Activated CD8-positive, alpha-beta T cell treated with anti-CD3 and anti-CD28 coated beads, Interleukin-2, amount 10 ng/mL, durations not matched to agents 7 days and 5 days (primary cell): ENCODE measurements at regions of chr6 and their contacts with region 1.

Region 1: GRCh38 chr6:39102071-39102820 is 12.7 kb downstream of the SAYSD1 start:
- DNase-seq: no peak
- ATAC-seq: no peak
- H3K4me3 Mint-ChIP-seq: no peak overlapping the region
- H3K27ac Mint-ChIP-seq: no peak overlapping the region
- H3K4me1 Mint-ChIP-seq: peaks cover 11% of the 10 kb centered on the region
- H3K27me3 Mint-ChIP-seq: peaks cover 4% of the 10 kb centered on the region

Region 2: DNA sequence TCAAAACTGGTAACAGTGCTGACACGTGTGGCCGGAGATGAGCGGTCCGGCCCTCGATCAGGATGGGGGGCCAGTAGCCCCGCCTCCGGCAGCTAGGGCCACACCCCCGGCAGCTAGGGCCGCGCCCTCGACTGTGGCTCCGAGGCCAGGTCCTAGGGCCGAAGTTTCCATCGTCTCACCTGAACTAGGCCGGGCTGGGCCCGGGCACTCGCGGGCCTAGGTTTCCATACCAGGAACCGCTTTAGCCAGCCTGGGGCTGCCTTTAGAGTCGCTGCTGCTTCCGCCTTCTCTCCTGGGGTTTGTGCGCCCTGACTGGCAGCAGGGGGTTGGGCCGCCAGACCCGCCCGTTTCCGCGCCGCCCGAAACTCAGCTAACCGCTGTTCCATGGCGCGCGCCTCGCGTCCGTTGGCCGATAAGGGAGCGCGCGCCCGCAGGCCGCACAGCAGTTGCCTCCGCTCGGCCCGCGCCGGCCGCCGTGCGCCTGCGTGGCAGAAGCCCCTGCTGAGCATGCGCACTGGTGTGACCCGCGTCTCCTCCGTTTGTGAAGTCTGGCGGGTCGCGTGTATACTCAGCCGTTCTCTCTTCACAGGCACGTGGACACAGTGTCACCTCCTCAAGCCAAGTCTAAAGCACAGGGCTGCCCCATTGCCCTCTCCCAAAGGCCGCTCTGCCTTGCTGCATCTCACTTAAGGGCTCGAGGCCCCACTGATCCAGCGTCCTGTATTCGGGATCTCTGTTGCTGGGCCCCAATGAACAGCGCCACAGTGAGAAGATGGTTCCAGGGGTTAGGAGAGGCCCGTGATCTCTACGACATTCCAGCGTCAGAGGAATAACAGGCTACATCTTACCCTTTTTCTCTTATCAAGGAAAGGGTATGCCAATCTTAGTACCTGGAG is 12.7 kb after region 1 on chr6 and contains the start of gene SAYSD1:
- CTCF ChIA-PET with region 1: interaction called, 24 read pairs
- POLR2A ChIA-PET with region 1: interaction called, 4 read pairs
- DNase-seq: peak; percentile 95
- ATAC-seq: peak; percentile 89
- H3K4me3 Mint-ChIP-seq: peak within 1 kb of the TSS; percentile 87
- H3K27ac Mint-ChIP-seq: peak within 1 kb of the TSS; percentile 96
- H3K4me1 Mint-ChIP-seq: peaks cover 58% of the 10 kb centered on the region
- H3K27me3 Mint-ChIP-seq: peaks cover 1% of the 10 kb centered on the region
- total RNA-seq, gene SAYSD1: 11.0 to 11.8 TPM